ENCODE measurements at regions of chr9 and their contacts with region 1.

Region 1: GRCh38 chr9:136400038-136400834 is at the start of gene SNAPC4:
- DNase-seq: peak; percentile 65 to 89 (median 79)
- H3K4me3 ChIP-seq: peak within 1 kb of the TSS; percentile 68 to 99 (median 91)
- H3K27ac ChIP-seq: peak within 1 kb of the TSS in 46 of 59 donors; percentile 6 to 88 (median 58)
- H3K27me3 ChIP-seq: no peaks in the 10 kb centered on the region
- CTCF ChIP-seq: peak; percentile 74 to 100 (median 98)
- total RNA-seq, gene SNAPC4: 9.8 to 23.9 (median 14.4) TPM

Region 2: DNA sequence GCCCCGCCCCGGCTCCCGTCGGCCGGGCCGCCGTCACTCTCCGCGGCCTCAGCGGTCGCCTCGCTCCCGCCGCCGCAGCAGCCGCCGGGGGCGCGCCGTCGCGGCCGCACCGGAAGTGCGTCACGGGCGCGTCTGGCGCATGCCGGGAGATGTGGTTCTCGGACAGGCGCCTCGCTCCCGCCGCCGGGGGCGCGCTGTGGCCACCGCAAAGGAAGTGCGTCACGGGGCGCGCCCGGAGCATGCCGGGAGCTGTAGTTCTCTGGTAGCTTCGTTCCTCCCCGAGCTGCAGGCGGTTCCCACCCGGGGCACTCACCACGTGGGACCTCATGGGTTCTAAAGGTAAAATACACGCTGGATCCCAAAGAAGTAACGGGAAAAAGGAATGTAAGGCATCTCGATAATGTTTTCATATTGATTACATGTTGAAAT is 438.9 kb before region 1 on chr9 and contains the start of gene UBAC1:
- intact Hi-C with region 1: loop called in 1 of 2 experiments (anchors 10 kb)
- DNase-seq: peak; percentile 94 to 98 (median 96)
- H3K4me3 ChIP-seq: peak within 1 kb of the TSS; percentile 59 to 99 (median 90)
- H3K27ac ChIP-seq: peak within 1 kb of the TSS in 55 of 59 donors; percentile 10 to 94 (median 81)
- H3K27me3 ChIP-seq: no peaks in the 10 kb centered on the region
- CTCF ChIP-seq: peak in 54 of 56 donors; percentile 26 to 71 (median 56)
- total RNA-seq, gene UBAC1: 42.5 to 80.5 (median 55.0) TPM

Region 3: GRCh38 chr9:136312436-136312835 is 87.8 kb before region 1 on chr9:
- intact Hi-C with region 1: loop called (anchors 1 to 5 kb)
- DNase-seq: peak in 5 of 10 donors; percentile 17 to 76 (median 46)
- H3K4me3 ChIP-seq: no peak overlapping the region
- H3K27ac ChIP-seq: no peak overlapping the region
- H3K27me3 ChIP-seq: peaks cover 0 to 17% (median 0%) of the 10 kb centered on the region in 45 donors
- CTCF ChIP-seq: peak in 55 of 56 donors; percentile 37 to 85 (median 68)

Region 4: DNA sequence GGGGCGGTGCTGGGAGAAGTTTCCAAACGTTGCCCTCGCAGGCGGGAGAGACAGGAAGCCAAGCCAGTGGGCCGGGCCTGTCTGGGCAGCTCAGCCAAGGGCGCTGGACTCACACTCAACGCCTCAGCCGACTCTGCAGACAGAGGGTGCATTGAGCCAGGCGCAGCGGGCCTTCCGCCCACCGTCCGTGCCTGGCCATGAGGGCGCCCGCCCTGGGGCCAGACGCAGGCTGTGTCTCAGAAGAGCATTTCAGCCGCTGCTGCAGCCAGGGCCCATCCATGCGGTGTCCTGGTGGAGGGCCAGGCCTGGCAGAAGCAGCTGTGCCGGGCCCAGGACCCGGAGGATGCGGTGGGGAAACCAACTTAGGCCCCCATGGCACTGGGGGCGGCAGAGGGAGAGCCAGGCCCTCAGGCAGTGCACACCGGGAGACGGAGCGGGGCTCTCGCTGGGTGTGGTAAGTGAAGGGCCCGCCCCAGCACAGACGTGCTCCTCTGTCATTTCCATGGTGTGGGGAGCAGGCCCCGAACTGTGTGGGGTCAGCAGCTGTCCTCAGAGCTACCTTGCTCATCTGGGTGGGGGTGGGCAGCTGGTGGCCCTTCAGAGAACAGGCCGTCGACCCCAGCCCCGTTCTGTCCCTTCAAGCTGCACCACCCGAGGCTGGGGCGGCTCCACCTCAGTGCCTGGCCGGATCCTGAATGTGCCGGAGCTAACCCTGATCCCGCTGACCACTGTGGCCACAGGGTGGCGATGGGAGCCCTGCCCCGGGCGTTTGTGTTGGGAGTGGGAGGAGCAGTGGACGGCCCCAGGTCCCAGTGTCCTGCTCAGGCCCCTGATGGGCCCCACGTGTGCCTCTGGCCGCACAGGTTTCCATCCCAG is 54.7 kb before region 1 on chr9:
- intact Hi-C with region 1: loop called in 1 of 2 experiments (anchors 5 kb)
- DNase-seq: peak; percentile 73 to 90 (median 87)
- H3K4me3 ChIP-seq: peak overlapping the region in 48 of 59 donors; percentile 3 to 61 (median 30)
- H3K27ac ChIP-seq: peak overlapping the region in 57 of 59 donors; percentile 54 to 96 (median 88)
- H3K27me3 ChIP-seq: no peaks in the 10 kb centered on the region
- CTCF ChIP-seq: peak in 49 of 56 donors; percentile 13 to 65 (median 39)

Region 5: GRCh38 chr9:136410500-136411287 is 10.5 kb after region 1 on chr9 and contains the starts of genes ENTR1 and PMPCA:
- intact Hi-C with region 1: loop called in 1 of 2 experiments (anchors 1 kb)
- DNase-seq: peak; percentile 88 to 96 (median 91)
- H3K4me3 ChIP-seq: peak within 1 kb of the TSS; percentile 77 to 100 (median 95)
- H3K27ac ChIP-seq: peak within 1 kb of the TSS in 56 of 59 donors; percentile 27 to 94 (median 79)
- H3K27me3 ChIP-seq: no peaks in the 10 kb centered on the region
- CTCF ChIP-seq: peak in 16 of 56 donors; percentile 5 to 42 (median 24)
- total RNA-seq, gene ENTR1: 22.3 to 62.1 (median 38.0) TPM
- total RNA-seq, gene PMPCA: 39.7 to 75.4 (median 53.0) TPM

Region 6: GRCh38 chr9:136451221-136451877 is 51.1 kb after region 1 on chr9:
- intact Hi-C with region 1: no loop called
- DNase-seq: no peak
- H3K4me3 ChIP-seq: no peak overlapping the region
- H3K27ac ChIP-seq: peak overlapping the region in 2 of 59 donors; percentile 3 to 16
- H3K27me3 ChIP-seq: no peaks in the 10 kb centered on the region
- CTCF ChIP-seq: no peak